Activated CD4-positive, alpha-beta T cell treated with anti-CD3 and anti-CD28 coated beads, Interleukin-2, amount 10 ng/mL, durations not matched to agents 24 days and 14 days (primary cell): ENCODE measurements at regions of chr6 and their contacts with region 1.

Region 1: DNA sequence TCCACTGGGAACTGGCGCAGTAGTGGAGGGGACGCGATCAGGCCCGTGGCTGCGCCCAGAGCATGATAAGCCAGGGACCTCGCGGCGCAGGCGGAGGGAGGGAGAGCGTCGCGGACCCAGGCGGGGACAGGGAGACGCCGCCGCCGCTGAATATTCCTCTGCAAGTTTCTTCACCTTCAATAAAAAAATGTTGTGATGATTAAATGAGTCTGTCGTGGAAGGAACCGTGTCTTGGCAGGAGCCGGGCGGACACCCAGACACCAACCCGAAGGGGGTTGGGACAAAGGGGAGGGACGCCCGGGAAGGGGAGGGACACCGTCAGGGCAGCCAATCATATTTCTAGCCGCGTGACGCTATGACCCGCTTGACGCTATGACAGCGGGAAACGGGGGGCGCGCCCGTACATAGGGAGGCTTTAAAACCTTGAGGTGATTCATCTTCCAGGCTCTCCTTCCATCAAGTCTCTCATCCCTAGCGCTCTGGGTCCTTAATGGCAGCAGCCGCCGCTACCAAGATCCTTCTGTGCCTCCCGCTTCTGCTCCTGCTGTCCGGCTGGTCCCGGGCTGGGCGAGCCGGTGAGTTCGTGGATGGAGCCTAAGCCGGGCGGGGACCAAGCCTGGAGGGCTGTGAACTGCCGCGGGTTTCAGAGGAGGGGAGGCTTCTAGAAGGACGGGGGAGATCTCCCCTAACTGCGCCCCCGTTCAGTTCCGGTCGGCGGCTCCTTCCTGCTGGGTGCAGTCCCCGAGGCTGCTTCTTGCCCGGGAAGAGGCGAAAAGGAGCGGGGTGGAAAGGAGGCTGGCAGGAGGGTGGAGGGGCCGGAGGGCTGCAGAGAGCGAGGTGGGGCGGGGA is at the start of gene ULBP2:
- DNase-seq: peak; percentile 96
- H3K4me3 Mint-ChIP-seq: peak within 1 kb of the TSS; percentile 85
- H3K27ac Mint-ChIP-seq: peak within 1 kb of the TSS; percentile 83
- H3K4me1 Mint-ChIP-seq: peaks cover 32% of the 10 kb centered on the region
- H3K27me3 Mint-ChIP-seq: peaks cover 72% of the 10 kb centered on the region
- total RNA-seq, gene ULBP2: 0.40 and 0.47 TPM in 2 replicates

Region 2: DNA sequence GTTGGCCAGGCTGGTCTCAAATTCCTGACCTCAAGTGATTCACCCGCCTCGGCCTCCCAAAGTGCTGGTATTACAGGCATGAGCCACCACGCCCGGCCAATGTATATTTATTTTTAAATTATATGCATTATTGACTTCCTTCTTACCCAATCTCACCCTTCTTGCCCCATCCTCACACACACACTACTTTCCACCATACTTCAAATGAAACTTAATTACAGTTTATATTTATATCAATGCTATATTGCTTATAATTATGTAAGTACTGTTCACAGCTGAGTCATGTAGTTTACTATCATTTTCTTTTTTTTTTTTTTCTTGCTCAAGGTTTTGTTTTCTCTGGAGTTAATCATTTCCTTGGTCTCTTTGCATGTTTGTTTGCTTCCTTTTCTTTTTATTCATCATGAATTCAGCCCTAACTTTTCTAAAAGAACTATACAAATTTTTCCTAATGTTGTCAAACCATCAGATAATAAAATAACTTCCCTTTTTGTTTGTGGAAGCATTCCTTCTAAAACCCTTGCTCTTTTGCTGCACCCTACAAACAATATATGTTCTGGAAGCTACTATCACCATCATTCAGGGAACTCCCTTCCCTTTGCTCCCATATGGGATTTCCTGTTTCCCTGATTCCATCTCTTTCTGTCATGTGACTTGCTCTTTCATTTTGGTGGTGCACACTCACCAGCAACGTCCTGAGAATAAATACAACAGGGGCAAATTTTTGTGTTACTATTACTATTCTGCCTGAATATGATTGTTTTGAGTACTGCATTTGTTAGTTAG is 1800.8 kb before region 1 on chr6:
- intact Hi-C with region 1: no loop called
- DNase-seq: no peak
- H3K4me3 Mint-ChIP-seq: no peak overlapping the region
- H3K27ac Mint-ChIP-seq: no peak overlapping the region
- H3K4me1 Mint-ChIP-seq: no peaks in the 10 kb centered on the region
- H3K27me3 Mint-ChIP-seq: peaks cover 2% of the 10 kb centered on the region

Region 3: DNA sequence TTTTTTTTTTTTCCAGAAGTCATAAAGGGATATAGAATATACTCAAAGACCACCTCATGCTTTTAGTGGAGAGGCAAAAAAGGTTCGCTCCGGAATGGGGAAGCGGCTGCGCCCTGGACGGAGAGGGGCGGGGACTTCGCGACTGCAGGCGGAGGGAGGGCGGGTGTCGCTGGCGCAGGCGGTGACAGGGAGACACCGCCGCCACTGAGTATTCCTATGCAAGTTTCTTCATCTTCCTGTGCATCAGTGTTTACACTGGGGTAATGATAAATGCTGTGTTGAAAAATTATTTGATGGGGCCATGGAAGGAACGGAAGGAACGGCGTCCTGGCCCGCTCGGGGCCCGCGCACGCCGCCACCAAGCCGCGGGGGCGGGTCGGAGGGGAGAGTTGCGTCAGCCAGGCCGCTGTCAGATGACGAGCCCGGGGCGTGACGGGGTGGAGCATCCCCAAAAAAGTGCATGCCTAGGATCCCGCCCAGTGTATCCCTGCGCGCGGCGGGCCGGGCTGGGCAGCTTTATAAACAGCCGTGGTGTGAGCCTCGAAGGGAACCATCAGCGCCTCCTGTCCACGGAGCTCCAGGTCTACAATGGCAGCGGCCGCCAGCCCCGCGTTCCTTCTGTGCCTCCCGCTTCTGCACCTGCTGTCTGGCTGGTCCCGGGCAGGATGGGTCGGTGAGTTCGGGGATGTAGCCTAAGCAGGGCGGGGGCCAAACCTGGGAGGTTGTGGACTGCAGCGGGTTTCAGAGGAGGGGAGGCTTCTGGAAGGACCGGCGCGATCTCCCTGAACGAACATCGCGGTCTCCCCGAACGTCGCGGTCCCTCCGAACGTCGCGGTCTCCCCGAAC is 21.9 kb after region 1 on chr6 and contains the start of gene ULBP1:
- intact Hi-C with region 1: loop called (anchors 1 kb)
- DNase-seq: peak; percentile 96
- H3K4me3 Mint-ChIP-seq: peak within 1 kb of the TSS; percentile 95
- H3K27ac Mint-ChIP-seq: peak within 1 kb of the TSS; percentile 89
- H3K4me1 Mint-ChIP-seq: peaks cover 36% of the 10 kb centered on the region
- H3K27me3 Mint-ChIP-seq: peaks cover 74% of the 10 kb centered on the region
- total RNA-seq, gene ULBP1: 0.49 and 0.76 TPM in 2 replicates

Region 4: DNA sequence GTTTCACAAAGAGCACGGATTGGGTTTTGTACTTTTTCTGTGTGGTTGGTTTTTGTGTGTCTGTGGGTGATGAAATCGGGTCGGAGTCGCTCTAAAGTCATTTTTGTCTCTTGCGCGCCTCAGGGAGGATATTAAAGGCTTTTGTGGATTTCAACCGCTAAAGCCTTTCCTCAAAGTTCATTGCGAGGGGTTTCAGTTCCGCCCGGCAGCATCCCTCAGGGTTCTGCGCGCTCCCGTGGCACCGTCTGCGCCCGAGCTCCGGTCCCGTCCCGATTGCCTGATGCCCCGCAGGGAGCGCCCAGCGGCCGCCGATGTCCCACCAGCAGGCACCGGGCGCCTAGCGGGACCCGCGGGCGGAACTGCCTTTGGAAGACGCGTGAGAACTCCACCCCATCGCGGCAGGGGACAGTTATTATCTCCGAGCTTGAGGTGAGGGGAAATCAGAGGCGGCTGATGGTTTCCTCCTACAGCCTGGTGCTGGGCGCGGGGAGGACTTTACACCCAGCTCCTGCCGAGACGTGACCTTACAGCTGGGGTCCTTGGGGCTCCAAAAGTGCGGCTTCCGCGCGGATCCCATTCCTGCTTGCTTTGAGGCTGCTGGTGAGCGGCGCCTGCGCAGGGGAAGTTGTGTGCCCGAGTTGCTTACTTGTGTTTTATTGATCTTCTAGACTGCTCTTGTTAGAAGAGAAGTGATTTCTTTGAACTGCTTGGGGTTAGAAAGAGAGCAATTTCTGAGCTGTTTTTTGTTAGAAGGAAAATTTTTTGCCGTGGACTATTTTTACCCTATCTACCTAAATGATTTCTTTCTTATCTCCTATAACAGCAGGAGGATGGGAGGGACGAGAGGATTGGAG is 49.0 kb after region 1 on chr6:
- intact Hi-C with region 1: loop called (anchors 2 kb)
- DNase-seq: peak; percentile 78
- H3K4me3 Mint-ChIP-seq: peak overlapping the region; percentile 87
- H3K27ac Mint-ChIP-seq: peak overlapping the region; percentile 54
- H3K4me1 Mint-ChIP-seq: peaks cover 37% of the 10 kb centered on the region
- H3K27me3 Mint-ChIP-seq: peaks cover 93% of the 10 kb centered on the region